ENCODE measurements at regions of chr2 and their contacts with region 1.

Region 1: DNA sequence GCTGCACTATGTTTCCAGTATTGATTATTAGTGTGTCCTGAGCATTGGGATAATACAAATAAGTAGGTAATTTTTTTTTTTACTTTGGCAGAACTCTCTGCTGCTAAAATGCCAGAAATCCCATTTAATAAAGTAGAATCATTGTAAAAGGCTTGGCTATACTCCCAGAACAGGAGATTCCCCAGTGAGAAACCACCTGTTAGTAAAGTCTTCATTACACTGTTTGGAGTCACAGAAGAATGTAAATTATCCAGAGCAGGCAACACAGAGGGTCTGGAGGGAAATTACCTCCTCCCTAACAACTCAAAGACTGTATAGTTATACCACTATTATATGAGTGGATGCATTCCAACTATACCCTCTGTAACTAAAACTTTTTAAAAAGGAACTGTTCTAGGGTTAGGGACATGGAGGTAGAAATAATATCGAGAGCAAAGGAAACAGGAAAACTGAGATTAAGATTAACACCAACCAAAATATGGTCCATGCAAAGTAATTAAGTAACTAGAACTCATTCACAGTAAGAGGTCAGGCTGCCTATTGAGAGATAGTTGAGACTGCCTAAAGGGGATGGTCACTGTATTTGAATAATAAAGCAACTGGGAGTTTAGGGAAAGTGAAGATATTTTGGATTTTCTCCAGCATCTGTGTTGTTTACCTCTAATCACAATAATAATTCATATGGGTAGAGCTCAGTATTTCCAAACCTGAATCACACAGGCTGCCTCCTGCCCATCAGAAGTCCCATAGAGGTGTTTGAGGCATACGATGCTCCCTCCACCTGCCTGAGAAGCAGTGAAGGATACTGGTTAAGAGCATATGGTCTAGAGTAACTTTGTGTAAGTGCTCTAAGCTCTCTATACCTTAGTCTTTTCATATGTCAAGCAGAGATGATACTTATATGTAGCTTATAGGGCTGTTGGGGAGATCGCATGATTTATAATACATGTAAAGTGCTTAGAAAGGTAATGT is 34.4 kb downstream of the MAP2 start:
- DNase-seq: no peak
- ATAC-seq: no peak
- H3K4me3 ChIP-seq: no peak overlapping the region
- H3K27ac ChIP-seq: no peak overlapping the region
- H3K4me1 ChIP-seq: peaks cover 0 to 13% (median 1%) of the 10 kb centered on the region in 9 donors
- H3K27me3 ChIP-seq: no peaks in the 10 kb centered on the region
- CTCF ChIP-seq: no peak

Region 2: GRCh38 chr2:208916881-208917280 is 541.4 kb before region 1 on chr2:
- intact Hi-C with region 1: no loop called
- DNase-seq: no peak
- ATAC-seq: no peak
- H3K4me3 ChIP-seq: no peak overlapping the region
- H3K27ac ChIP-seq: no peak overlapping the region
- H3K4me1 ChIP-seq: no peaks in the 10 kb centered on the region
- H3K27me3 ChIP-seq: no peaks in the 10 kb centered on the region
- CTCF ChIP-seq: no peak

Region 3: DNA sequence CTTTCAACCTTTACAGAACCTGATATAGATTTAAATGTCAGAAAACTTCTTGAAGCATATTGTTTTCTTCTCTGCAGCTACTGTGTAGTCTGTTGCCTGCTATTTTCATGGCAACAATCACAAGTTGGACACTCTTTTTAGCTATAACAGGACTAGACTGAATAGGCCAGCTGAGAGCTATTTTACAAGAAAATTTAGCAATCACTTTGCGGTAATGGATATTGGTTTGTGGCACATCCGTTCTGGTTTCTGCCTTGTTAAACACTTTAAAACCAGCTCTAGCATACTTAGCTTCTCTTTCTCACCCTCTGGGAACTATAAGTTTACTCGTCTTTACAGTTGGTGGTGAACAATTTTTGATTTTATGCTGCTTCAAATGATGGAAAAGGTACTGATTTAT is 91.3 kb after region 1 on chr2:
- intact Hi-C with region 1: loop called in 1 of 10 experiments (anchors 10 kb)
- DNase-seq: no peak
- ATAC-seq: no peak
- H3K4me3 ChIP-seq: no peak overlapping the region
- H3K27ac ChIP-seq: no peak overlapping the region
- H3K4me1 ChIP-seq: no peaks in the 10 kb centered on the region
- H3K27me3 ChIP-seq: no peaks in the 10 kb centered on the region
- CTCF ChIP-seq: no peak

Region 4: GRCh38 chr2:209817844-209818271 is 359.6 kb after region 1 on chr2:
- intact Hi-C with region 1: no loop called
- DNase-seq: no peak
- ATAC-seq: peak in 3 of 8 donors; percentile 24 to 35 (median 34)
- H3K4me3 ChIP-seq: no peak overlapping the region
- H3K27ac ChIP-seq: peak overlapping the region in 2 of 10 donors; percentile 10 to 50
- H3K4me1 ChIP-seq: no peaks in the 10 kb centered on the region
- H3K27me3 ChIP-seq: no peaks in the 10 kb centered on the region
- CTCF ChIP-seq: no peak